B cell (primary cell): ENCODE measurements at regions of chr14 and their contacts with region 1.

Region 1: DNA sequence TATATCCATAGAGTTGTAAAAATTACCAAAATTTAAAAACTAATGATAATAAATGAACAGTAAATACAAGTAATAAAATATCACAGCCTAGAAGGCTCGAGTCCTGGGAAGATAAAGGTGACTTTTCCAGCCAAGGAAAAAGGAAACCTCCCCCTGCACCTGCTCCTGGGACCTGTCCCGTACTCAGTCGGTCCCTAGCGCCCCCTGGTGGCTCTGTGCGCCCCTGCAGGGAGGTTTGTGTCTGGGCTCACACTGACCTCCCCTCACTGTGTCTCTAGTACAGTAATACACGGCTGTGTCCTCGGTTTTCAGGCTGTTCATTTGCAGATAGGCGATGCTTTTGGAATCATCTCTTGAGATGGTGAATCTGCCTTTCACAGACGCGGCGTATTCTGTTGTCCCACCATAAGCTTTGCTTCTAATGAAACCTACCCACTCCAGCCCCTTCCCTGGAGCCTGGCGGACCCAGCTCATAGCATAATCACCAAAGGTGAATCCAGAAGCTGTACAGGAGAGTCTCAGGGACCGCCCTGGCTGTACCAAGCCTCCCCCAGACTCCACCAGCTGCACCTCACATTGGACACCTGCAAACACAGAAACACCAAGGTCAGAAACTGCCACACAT is 1030.4 kb downstream of the TMEM121 start:
- DNase-seq: peak; percentile 77
- ATAC-seq: peak; percentile 75
- H3K4me3 ChIP-seq: no peak overlapping the region
- H3K4me3 Mint-ChIP-seq: no peak overlapping the region
- H3K27ac ChIP-seq: no peak overlapping the region
- H3K27ac Mint-ChIP-seq: peak overlapping the region; percentile 50
- H3K4me1 ChIP-seq: no peaks in the 10 kb centered on the region
- H3K4me1 Mint-ChIP-seq: peaks cover 2% of the 10 kb centered on the region
- H3K27me3 ChIP-seq: peaks cover 0 to 4% (median 0%) of the 10 kb centered on the region in 4 experiments
- H3K27me3 Mint-ChIP-seq: peaks cover 11% of the 10 kb centered on the region
- CTCF ChIP-seq: peak; percentile 85

Region 2: DNA sequence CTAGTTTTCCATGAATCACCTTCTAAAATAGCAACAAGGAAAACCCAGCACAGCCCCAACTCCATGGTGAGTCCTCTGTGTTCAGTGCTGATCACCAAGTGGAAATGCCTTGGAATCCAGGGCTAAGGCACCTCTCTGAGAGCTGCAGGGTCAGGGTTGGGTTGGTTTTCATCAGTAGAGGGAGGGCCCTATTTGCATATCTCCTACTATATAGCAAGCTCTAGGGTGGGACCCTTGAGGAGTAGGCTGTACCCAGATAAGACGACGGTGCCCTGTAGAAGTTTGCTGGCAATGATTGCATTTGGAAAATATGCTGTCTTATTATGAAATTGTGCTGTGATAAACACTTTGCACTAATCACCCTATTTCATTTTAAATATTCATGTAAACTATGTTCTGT is 18.6 kb before region 1 on chr14:
- CTCF ChIA-PET with region 1: interaction called, 54 read pairs
- POLR2A ChIA-PET with region 1: no interaction called
- intact Hi-C with region 1: loop called (anchors 1 kb)
- DNase-seq: peak; percentile 54
- ATAC-seq: no peak
- H3K4me3 ChIP-seq: peak overlapping the region in 1 of 5 experiments; percentile 30
- H3K4me3 Mint-ChIP-seq: peak overlapping the region; percentile 60
- H3K27ac ChIP-seq: peak overlapping the region; percentile 57 to 85
- H3K27ac Mint-ChIP-seq: peak overlapping the region; percentile 85
- H3K4me1 ChIP-seq: peaks cover 33 to 36% of the 10 kb centered on the region in 2 donors
- H3K4me1 Mint-ChIP-seq: peaks cover 43% of the 10 kb centered on the region
- H3K27me3 ChIP-seq: peaks cover 0 to 5% (median 1%) of the 10 kb centered on the region in 4 experiments
- H3K27me3 Mint-ChIP-seq: peaks cover 10% of the 10 kb centered on the region
- CTCF ChIP-seq: no peak

Region 3: GRCh38 chr14:106605548-106606448 is 49.0 kb after region 1 on chr14:
- CTCF ChIA-PET with region 1: interaction called, 14 read pairs
- POLR2A ChIA-PET with region 1: no interaction called
- intact Hi-C with region 1: no loop called
- DNase-seq: peak; percentile 90
- ATAC-seq: peak; percentile 99
- H3K4me3 ChIP-seq: no peak overlapping the region
- H3K4me3 Mint-ChIP-seq: no peak overlapping the region
- H3K27ac ChIP-seq: no peak overlapping the region
- H3K27ac Mint-ChIP-seq: no peak overlapping the region
- H3K4me1 ChIP-seq: peaks cover 0 to 9% of the 10 kb centered on the region in 2 donors
- H3K4me1 Mint-ChIP-seq: peaks cover 14% of the 10 kb centered on the region
- H3K27me3 ChIP-seq: peaks cover 0 to 13% (median 8%) of the 10 kb centered on the region in 4 experiments
- H3K27me3 Mint-ChIP-seq: peaks cover 65% of the 10 kb centered on the region
- CTCF ChIP-seq: peak; percentile 76